ENCODE measurements at regions of chr6 and their contacts with region 1.

Region 1: GRCh38 chr6:110389689-110390382 is 25.5 kb downstream of the DDO start:
- DNase-seq: peak in 1 of 6 donors; percentile 11
- ATAC-seq: peak; percentile 65 to 87 (median 75)
- H3K4me3 ChIP-seq: no peak overlapping the region
- H3K27ac ChIP-seq: no peak overlapping the region
- H3K4me1 ChIP-seq: peaks cover 0 to 18% (median 0%) of the 10 kb centered on the region in 3 donors
- H3K27me3 ChIP-seq: no peaks in the 10 kb centered on the region
- CTCF ChIP-seq: no peak

Region 2: DNA sequence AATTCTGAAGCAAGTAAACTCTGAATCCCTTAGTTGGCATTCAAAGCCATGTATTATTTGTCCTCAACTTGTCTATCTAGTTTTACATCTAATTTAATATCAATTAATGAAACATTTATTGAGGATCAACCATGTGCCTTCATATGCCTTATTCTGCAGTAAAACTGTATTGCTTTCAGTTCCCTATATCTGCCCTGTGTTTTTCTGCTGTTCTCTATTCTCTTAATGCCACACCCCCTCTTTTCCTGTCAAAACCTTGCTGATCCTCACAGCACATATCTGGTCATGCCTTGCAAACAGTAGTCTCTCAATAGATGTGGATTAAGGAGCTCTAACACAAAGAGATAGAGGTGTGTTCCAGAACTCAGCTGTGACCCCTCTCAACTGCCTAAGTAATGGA is 696.7 kb before region 1 on chr6:
- intact Hi-C with region 1: no loop called
- DNase-seq: no peak
- ATAC-seq: no peak
- H3K4me3 ChIP-seq: no peak overlapping the region
- H3K27ac ChIP-seq: no peak overlapping the region
- H3K4me1 ChIP-seq: peaks cover 0 to 8% (median 0%) of the 10 kb centered on the region in 3 donors
- H3K27me3 ChIP-seq: no peaks in the 10 kb centered on the region
- CTCF ChIP-seq: no peak

Region 3: GRCh38 chr6:110179401-110180227 is 210.2 kb before region 1 on chr6 and contains the start of gene WASF1:
- intact Hi-C with region 1: loop called in 1 of 3 experiments (anchors 5 kb)
- DNase-seq: peak; percentile 90 to 95 (median 92)
- ATAC-seq: peak; percentile 96 to 98 (median 96)
- H3K4me3 ChIP-seq: peak within 1 kb of the TSS; percentile 55 to 86 (median 80)
- H3K27ac ChIP-seq: peak within 1 kb of the TSS; percentile 64 to 78 (median 72)
- H3K4me1 ChIP-seq: peaks cover 8 to 33% (median 15%) of the 10 kb centered on the region in 3 donors
- H3K27me3 ChIP-seq: no peaks in the 10 kb centered on the region
- CTCF ChIP-seq: no peak
- total RNA-seq, gene WASF1: 1.2 to 5.7 (median 2.1) TPM

Region 4: GRCh38 chr6:110282412-110282811 is 107.4 kb before region 1 on chr6:
- intact Hi-C with region 1: no loop called
- DNase-seq: no peak
- ATAC-seq: no peak
- H3K4me3 ChIP-seq: no peak overlapping the region
- H3K27ac ChIP-seq: no peak overlapping the region
- H3K4me1 ChIP-seq: peaks cover 0 to 6% (median 4%) of the 10 kb centered on the region in 3 donors
- H3K27me3 ChIP-seq: no peaks in the 10 kb centered on the region
- CTCF ChIP-seq: no peak

Region 5: GRCh38 chr6:110476046-110476849 is 86.4 kb after region 1 on chr6 and contains the start of gene SLC22A16:
- intact Hi-C with region 1: no loop called
- DNase-seq: peak in 2 of 6 donors; percentile 58 to 63
- ATAC-seq: peak in 3 of 4 donors; percentile 41 to 63 (median 61)
- H3K4me3 ChIP-seq: peak within 1 kb of the TSS in 2 of 4 donors; percentile 7 to 37
- H3K27ac ChIP-seq: no peak within 1 kb of the TSS
- H3K4me1 ChIP-seq: no peaks in the 10 kb centered on the region
- H3K27me3 ChIP-seq: no peaks in the 10 kb centered on the region
- CTCF ChIP-seq: no peak
- total RNA-seq, gene SLC22A16: 0.22 to 0.35 TPM in 2 of 6 donors, not detected in the others

Measured in pancreas (tissue), 10 donors.